Naive thymus-derived CD4-positive, alpha-beta T cell (primary cell): ENCODE measurements at regions of chr12 and their contacts with region 1.

Region 1: DNA sequence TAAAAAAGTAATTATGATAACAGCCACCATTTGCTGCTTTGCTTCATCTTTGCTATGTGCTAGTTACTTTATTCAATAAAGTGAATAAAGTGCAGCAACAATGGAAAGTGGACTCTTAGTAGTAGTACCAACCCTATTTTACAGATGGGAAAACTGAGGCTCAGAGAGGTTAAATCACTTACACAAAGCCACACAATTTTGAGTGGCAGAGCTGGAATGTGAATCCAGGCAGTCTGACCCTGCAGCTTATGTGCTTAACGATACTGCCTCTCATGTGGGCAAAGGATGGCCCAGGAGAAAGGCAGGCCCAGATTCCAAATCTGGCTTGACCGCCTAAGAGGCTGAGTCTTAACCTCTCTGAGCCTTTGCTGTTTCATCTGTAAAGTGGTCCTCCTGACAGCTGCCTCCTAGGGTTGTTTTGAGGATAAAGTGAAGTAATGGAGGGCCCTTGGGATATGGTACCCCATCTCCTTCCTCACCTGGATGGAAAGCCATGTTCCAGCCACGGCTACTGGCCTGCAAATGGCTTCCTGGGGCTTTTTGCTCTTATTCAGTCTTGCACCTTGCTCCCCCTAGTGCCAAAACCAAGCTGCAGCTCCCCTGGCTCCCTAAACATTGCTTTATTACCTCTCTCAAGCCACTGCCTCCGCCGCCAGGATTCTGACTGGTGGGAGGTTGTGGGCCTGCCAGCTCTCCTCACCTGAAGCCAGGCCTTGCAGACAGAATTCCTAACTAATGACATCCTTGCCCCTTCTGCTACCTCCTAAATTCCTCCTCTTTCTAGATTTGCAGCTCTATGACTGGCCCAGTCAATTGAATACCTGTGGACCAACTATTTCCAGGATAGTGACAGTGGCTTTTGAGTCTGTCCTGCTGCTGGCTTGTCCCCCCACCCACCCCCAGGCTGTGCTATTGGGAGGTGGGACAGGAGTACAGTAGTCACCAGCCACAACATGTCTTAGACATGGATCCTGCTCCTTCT is 283.3 kb upstream of the PWP1 start:
- DNase-seq: peak; percentile 16 to 69 (median 61)
- ATAC-seq: peak; percentile 78
- H3K4me3 ChIP-seq: no peak overlapping the region
- H3K4me3 Mint-ChIP-seq: peak overlapping the region in 4 of 10 donors; percentile 12 to 48 (median 24)
- H3K27ac ChIP-seq: no peak overlapping the region
- H3K27ac Mint-ChIP-seq: peak overlapping the region in 7 of 9 donors; percentile 34 to 90 (median 57)
- H3K4me1 ChIP-seq: no peaks in the 10 kb centered on the region
- H3K4me1 Mint-ChIP-seq: peaks cover 10 to 48% (median 26%) of the 10 kb centered on the region in 7 donors
- H3K27me3 ChIP-seq: no peaks in the 10 kb centered on the region
- H3K27me3 Mint-ChIP-seq: no peaks in the 10 kb centered on the region

Region 2: GRCh38 chr12:107126796-107127481 is 275.4 kb before region 1 on chr12:
- CTCF ChIA-PET with region 1: interaction called, 84 read pairs
- POLR2A ChIA-PET with region 1: interaction called, 4 read pairs
- intact Hi-C with region 1: loop called (anchors 1 kb)
- DNase-seq: peak in 2 of 9 donors; percentile 11 to 16
- ATAC-seq: no peak
- H3K4me3 ChIP-seq: no peak overlapping the region
- H3K4me3 Mint-ChIP-seq: no peak overlapping the region
- H3K27ac ChIP-seq: no peak overlapping the region
- H3K27ac Mint-ChIP-seq: no peak overlapping the region
- H3K4me1 ChIP-seq: no peaks in the 10 kb centered on the region
- H3K4me1 Mint-ChIP-seq: no peaks in the 10 kb centered on the region
- H3K27me3 ChIP-seq: peaks cover 0 to 3% of the 10 kb centered on the region in 2 donors
- H3K27me3 Mint-ChIP-seq: peaks cover 5 to 31% (median 16%) of the 10 kb centered on the region in 5 donors

Region 3: DNA sequence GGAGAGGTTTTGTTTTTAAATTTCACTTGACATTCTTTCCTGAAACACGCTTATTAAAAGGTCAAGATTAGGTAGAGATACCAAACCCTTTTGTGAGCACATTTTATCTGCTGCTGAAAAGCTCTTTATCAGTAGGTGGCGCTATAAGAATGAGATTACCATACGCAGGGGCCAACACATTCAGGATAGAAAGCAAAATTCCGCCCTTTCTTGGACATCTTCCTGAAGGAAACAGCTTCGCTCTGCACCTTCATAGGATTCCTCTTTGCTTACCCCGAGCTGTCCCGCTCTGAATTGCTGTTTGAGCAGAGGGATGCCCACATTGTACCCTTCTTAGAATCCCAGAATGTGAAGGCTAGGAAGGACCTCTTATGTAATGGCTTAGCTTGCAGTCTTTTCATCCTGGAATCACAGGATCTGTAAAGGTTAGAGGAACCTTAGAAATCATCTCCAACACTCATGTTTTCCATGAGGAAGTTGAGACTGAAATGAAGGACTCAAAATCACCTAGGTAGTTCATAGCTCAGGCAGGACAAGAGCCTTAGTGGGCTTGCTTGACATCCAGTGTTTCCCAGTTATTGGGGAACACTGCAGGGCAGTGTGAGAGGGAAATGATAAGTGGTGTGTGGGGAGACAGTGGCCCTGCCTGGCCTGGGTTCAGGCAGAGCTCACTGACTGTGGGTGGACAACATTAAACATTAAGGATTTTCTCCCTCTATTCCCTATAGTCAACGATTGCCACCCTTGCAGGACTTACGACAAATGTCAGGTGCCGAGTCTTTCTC is 270.3 kb before region 1 on chr12:
- CTCF ChIA-PET with region 1: interaction called, 84 read pairs
- POLR2A ChIA-PET with region 1: interaction called, 4 read pairs
- intact Hi-C with region 1: loop called (anchors 1 kb)
- DNase-seq: peak in 6 of 9 donors; percentile 5 to 56 (median 42)
- ATAC-seq: peak; percentile 59
- H3K4me3 ChIP-seq: no peak overlapping the region
- H3K4me3 Mint-ChIP-seq: no peak overlapping the region
- H3K27ac ChIP-seq: no peak overlapping the region
- H3K27ac Mint-ChIP-seq: peak overlapping the region in 2 of 9 donors; percentile 12 to 46
- H3K4me1 ChIP-seq: no peaks in the 10 kb centered on the region
- H3K4me1 Mint-ChIP-seq: peaks cover 0 to 5% (median 0%) of the 10 kb centered on the region in 7 donors
- H3K27me3 ChIP-seq: no peaks in the 10 kb centered on the region
- H3K27me3 Mint-ChIP-seq: peaks cover 0 to 1% (median 0%) of the 10 kb centered on the region in 5 donors

Region 4: DNA sequence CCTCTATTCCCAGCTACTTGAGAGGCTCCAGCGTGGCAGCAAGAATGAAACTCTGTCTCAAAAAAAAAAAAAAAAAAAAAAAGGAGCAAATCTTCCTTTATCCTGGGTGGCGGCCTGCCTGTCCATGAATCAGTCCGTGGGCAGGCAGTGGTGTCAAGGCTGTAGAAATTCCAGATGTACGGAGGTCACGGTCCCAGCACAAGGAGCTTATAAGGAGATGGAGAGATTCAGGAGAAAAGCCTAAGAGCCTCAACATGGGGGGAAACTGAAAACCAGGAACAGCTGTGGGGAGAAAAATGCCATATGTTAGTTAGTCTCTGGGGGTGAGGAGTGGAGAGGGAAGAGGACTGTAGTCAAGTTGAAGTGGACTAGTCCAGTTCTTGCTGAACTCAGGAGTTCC is 178.5 kb before region 1 on chr12:
- CTCF ChIA-PET with region 1: no interaction called
- POLR2A ChIA-PET with region 1: no interaction called
- intact Hi-C with region 1: loop called in 1 of 2 experiments (anchors 1 kb)
- DNase-seq: no peak
- ATAC-seq: no peak
- H3K4me3 ChIP-seq: no peak overlapping the region
- H3K4me3 Mint-ChIP-seq: no peak overlapping the region
- H3K27ac ChIP-seq: no peak overlapping the region
- H3K27ac Mint-ChIP-seq: no peak overlapping the region
- H3K4me1 ChIP-seq: no peaks in the 10 kb centered on the region
- H3K4me1 Mint-ChIP-seq: peaks cover 0 to 4% (median 0%) of the 10 kb centered on the region in 7 donors
- H3K27me3 ChIP-seq: no peaks in the 10 kb centered on the region
- H3K27me3 Mint-ChIP-seq: peaks cover 3 to 32% (median 10%) of the 10 kb centered on the region in 5 donors

Region 5: GRCh38 chr12:107372229-107372658 is 30.1 kb before region 1 on chr12:
- CTCF ChIA-PET with region 1: interaction called, 16 read pairs
- POLR2A ChIA-PET with region 1: interaction called, 8 read pairs
- intact Hi-C with region 1: loop called (anchors 1 kb)
- DNase-seq: peak in 8 of 9 donors; percentile 37 to 74 (median 68)
- ATAC-seq: peak; percentile 76
- H3K4me3 ChIP-seq: peak overlapping the region; percentile 20
- H3K4me3 Mint-ChIP-seq: peak overlapping the region; percentile 63 to 85 (median 81)
- H3K27ac ChIP-seq: peak overlapping the region; percentile 64
- H3K27ac Mint-ChIP-seq: peak overlapping the region; percentile 88 to 96 (median 94)
- H3K4me1 ChIP-seq: peaks cover 50 to 73% of the 10 kb centered on the region in 2 donors
- H3K4me1 Mint-ChIP-seq: peaks cover 68 to 89% (median 86%) of the 10 kb centered on the region in 7 donors
- H3K27me3 ChIP-seq: no peaks in the 10 kb centered on the region
- H3K27me3 Mint-ChIP-seq: no peaks in the 10 kb centered on the region

Region 6: GRCh38 chr12:107448198-107448597 is 45.9 kb after region 1 on chr12:
- CTCF ChIA-PET with region 1: no interaction called
- POLR2A ChIA-PET with region 1: no interaction called
- intact Hi-C with region 1: no loop called
- DNase-seq: no peak
- ATAC-seq: no peak
- H3K4me3 ChIP-seq: no peak overlapping the region
- H3K4me3 Mint-ChIP-seq: no peak overlapping the region
- H3K27ac ChIP-seq: no peak overlapping the region
- H3K27ac Mint-ChIP-seq: peak overlapping the region in 1 of 9 donors; percentile 66
- H3K4me1 ChIP-seq: no peaks in the 10 kb centered on the region
- H3K4me1 Mint-ChIP-seq: peaks cover 0 to 28% (median 22%) of the 10 kb centered on the region in 7 donors
- H3K27me3 ChIP-seq: no peaks in the 10 kb centered on the region
- H3K27me3 Mint-ChIP-seq: no peaks in the 10 kb centered on the region

Region 7: GRCh38 chr12:107607464-107608392 is 205.4 kb after region 1 on chr12:
- CTCF ChIA-PET with region 1: interaction called, 12 read pairs
- POLR2A ChIA-PET with region 1: no interaction called
- intact Hi-C with region 1: loop called (anchors 1 kb)
- DNase-seq: peak; percentile 55 to 82 (median 71)
- ATAC-seq: peak; percentile 78
- H3K4me3 ChIP-seq: no peak overlapping the region
- H3K4me3 Mint-ChIP-seq: no peak overlapping the region
- H3K27ac ChIP-seq: no peak overlapping the region
- H3K27ac Mint-ChIP-seq: peak overlapping the region in 2 of 9 donors; percentile 9 to 25
- H3K4me1 ChIP-seq: no peaks in the 10 kb centered on the region
- H3K4me1 Mint-ChIP-seq: no peaks in the 10 kb centered on the region
- H3K27me3 ChIP-seq: no peaks in the 10 kb centered on the region
- H3K27me3 Mint-ChIP-seq: no peaks in the 10 kb centered on the region